HAP-1 (cell line): ENCODE measurements at regions of chr5 and their contacts with region 1.

Region 1: DNA sequence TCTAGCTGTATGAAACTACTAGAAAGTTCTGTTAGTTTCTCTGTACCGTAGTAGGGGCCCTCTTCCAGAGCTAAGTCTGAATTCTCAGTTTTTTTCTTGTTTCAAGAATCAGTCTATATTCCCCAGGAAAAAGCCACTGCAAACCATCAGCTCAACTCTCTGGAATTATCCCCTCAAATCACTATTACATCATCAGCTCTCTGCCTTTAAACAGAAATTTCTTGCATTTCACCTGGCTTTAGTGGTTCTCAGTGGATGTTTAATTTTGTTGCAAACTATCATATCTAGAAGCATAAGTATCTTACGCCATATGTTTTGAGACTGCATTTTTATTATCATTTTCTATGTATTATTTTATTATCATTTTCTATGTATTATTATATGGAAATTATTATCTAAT is 55.2 kb upstream of the PPP2CA start:
- DNase-seq: no peak
- H3K4me3 ChIP-seq: no peak overlapping the region
- H3K4me1 ChIP-seq: no peaks in the 10 kb centered on the region
- H3K27me3 ChIP-seq: no peaks in the 10 kb centered on the region

Region 2: GRCh38 chr5:134245101-134245604 is 35.9 kb before region 1 on chr5:
- in situ Hi-C with region 1: loop called (anchors 5 kb)
- DNase-seq: peak in 1 of 2 experiments; percentile 17
- H3K4me3 ChIP-seq: no peak overlapping the region
- H3K4me1 ChIP-seq: peaks cover 11% of the 10 kb centered on the region
- H3K27me3 ChIP-seq: no peaks in the 10 kb centered on the region